CD8-positive, alpha-beta T cell (primary cell): ENCODE measurements at regions of chr16 and their contacts with region 1.

Region 1: DNA sequence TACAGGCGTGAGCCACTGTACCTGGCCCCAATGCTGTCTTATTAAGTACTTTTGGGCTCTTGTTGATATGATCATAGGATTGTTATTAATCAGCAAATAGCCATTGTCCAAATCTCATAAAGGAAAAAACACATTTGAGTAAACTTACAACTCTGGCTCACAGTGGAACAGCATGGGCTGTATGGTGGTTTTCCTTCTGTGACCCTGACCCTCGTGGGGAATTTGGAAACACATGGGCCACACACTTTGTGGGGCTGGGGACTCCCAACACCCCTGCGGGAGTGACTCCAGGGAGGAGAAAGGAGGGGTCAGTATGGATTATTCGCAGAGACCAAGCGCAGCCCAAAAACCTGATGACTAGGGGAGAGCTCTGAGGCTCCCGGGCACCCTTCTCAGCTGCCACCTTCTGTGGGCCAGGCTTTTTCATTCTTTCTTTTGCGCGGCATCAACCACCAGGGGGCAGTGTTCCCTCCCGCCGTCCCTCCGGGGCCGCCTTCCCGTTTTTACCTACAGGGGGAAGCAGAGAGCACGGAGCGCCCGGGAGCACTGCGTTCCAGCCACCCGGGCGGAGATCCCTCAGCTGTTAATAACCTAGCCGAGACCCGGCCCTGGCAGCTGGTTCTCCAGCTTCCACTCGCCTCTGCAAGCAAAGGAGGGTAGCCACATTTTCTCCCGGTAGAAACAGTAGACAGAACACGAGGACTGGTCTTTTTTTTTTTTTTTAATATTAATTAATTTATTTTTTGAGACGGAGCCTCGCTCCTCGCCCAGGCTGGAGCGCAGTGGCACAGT is 9.7 kb downstream of the TSNAXIP1 start:
- DNase-seq: peak; percentile 79 to 96 (median 90)
- ATAC-seq: peak; percentile 99
- H3K4me3 ChIP-seq: no peak overlapping the region
- H3K4me3 Mint-ChIP-seq: peak overlapping the region; percentile 66
- H3K27ac ChIP-seq: no peak overlapping the region
- H3K27ac Mint-ChIP-seq: no peak overlapping the region
- H3K4me1 ChIP-seq: peaks cover 4% of the 10 kb centered on the region
- H3K4me1 Mint-ChIP-seq: peaks cover 5% of the 10 kb centered on the region
- H3K27me3 ChIP-seq: no peaks in the 10 kb centered on the region
- H3K27me3 Mint-ChIP-seq: no peaks in the 10 kb centered on the region
- CTCF ChIP-seq: peak; percentile 100

Region 2: GRCh38 chr16:67781565-67781921 is 34.9 kb before region 1 on chr16:
- CTCF ChIA-PET with region 1: interaction called, 10 read pairs
- POLR2A ChIA-PET with region 1: interaction called, 3 read pairs
- intact Hi-C with region 1: no loop called
- DNase-seq: peak in 4 of 9 experiments; percentile 8 to 54 (median 31)
- ATAC-seq: peak; percentile 80
- H3K4me3 ChIP-seq: no peak overlapping the region
- H3K4me3 Mint-ChIP-seq: peak overlapping the region; percentile 47
- H3K27ac ChIP-seq: peak overlapping the region; percentile 35 to 62
- H3K27ac Mint-ChIP-seq: peak overlapping the region; percentile 94
- H3K4me1 ChIP-seq: peaks cover 18% of the 10 kb centered on the region
- H3K4me1 Mint-ChIP-seq: peaks cover 40% of the 10 kb centered on the region
- H3K27me3 ChIP-seq: no peaks in the 10 kb centered on the region
- H3K27me3 Mint-ChIP-seq: no peaks in the 10 kb centered on the region
- CTCF ChIP-seq: no peak

Region 3: GRCh38 chr16:67833418-67834241 is 17.2 kb after region 1 on chr16:
- CTCF ChIA-PET with region 1: interaction called, 41 read pairs
- POLR2A ChIA-PET with region 1: interaction called, 9 read pairs
- intact Hi-C with region 1: loop called (anchors 1 kb)
- DNase-seq: peak; percentile 84 to 96 (median 93)
- ATAC-seq: peak; percentile 99
- H3K4me3 ChIP-seq: peak overlapping the region; percentile 73 to 86
- H3K4me3 Mint-ChIP-seq: peak overlapping the region; percentile 94
- H3K27ac ChIP-seq: peak overlapping the region; percentile 52 to 59
- H3K27ac Mint-ChIP-seq: peak overlapping the region; percentile 77
- H3K4me1 ChIP-seq: peaks cover 17% of the 10 kb centered on the region
- H3K4me1 Mint-ChIP-seq: peaks cover 14% of the 10 kb centered on the region
- H3K27me3 ChIP-seq: no peaks in the 10 kb centered on the region
- H3K27me3 Mint-ChIP-seq: no peaks in the 10 kb centered on the region
- CTCF ChIP-seq: no peak

Region 4: DNA sequence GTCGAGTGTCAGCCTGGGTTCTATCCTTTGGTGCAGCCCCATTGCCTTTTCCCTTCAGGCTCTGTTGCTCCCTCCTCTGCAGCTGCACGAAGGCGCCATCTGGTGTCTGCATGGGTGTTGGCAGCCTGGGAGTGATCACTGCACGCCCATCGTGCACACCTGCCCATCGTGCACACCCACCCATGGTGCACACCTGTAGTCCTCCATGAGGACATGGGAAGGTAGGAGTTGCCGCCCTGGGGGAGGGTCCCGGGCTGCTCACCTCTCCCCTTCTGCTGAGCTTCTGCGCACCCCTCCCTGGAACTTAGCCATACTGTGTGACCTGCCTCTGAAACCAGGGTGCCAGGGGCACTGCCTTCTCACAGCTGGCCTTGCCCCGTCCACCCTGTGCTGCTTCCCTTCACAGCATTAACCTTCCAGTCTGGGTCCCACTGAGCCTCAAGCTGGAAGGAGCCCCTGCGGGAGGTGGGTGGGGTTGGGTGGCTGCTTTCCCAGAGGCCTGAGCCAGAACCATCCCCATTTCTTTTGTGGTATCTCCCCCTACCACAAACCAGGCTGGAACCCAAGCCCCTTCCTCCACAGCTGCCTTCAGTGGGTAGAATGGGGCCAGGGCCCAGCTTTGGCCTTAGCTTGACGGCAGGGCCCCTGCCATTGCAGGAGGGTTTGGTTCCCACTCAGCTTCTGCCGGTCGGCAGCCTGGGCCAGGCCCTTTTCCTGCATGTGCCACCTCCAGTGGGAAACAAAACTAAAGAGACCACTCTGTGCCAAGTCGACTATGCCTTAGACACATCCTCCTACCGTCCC is 112.3 kb after region 1 on chr16:
- CTCF ChIA-PET with region 1: interaction called, 22 read pairs
- POLR2A ChIA-PET with region 1: no interaction called
- intact Hi-C with region 1: loop called in 1 of 2 experiments (anchors 1 kb)
- DNase-seq: peak; percentile 48 to 82 (median 75)
- ATAC-seq: peak; percentile 97
- H3K4me3 ChIP-seq: no peak overlapping the region
- H3K4me3 Mint-ChIP-seq: no peak overlapping the region
- H3K27ac ChIP-seq: peak overlapping the region in 1 of 2 experiments; percentile 31
- H3K27ac Mint-ChIP-seq: no peak overlapping the region
- H3K4me1 ChIP-seq: no peaks in the 10 kb centered on the region
- H3K4me1 Mint-ChIP-seq: peaks cover 3% of the 10 kb centered on the region
- H3K27me3 ChIP-seq: no peaks in the 10 kb centered on the region
- H3K27me3 Mint-ChIP-seq: no peaks in the 10 kb centered on the region
- CTCF ChIP-seq: peak; percentile 76

Region 5: GRCh38 chr16:68064791-68065365 is 248.4 kb after region 1 on chr16:
- CTCF ChIA-PET with region 1: interaction called, 7 read pairs
- POLR2A ChIA-PET with region 1: no interaction called
- intact Hi-C with region 1: loop called (anchors 1 to 2 kb)
- DNase-seq: peak; percentile 39 to 86 (median 73)
- ATAC-seq: peak; percentile 82
- H3K4me3 ChIP-seq: no peak overlapping the region
- H3K4me3 Mint-ChIP-seq: no peak overlapping the region
- H3K27ac ChIP-seq: peak overlapping the region in 1 of 2 experiments; percentile 58
- H3K27ac Mint-ChIP-seq: peak overlapping the region; percentile 92
- H3K4me1 ChIP-seq: peaks cover 72% of the 10 kb centered on the region
- H3K4me1 Mint-ChIP-seq: peaks cover 76% of the 10 kb centered on the region
- H3K27me3 ChIP-seq: no peaks in the 10 kb centered on the region
- H3K27me3 Mint-ChIP-seq: no peaks in the 10 kb centered on the region
- CTCF ChIP-seq: peak; percentile 85